CD8-positive, alpha-beta T cell (primary cell): ENCODE measurements at regions of chr22 and their contacts with region 1.

Region 1: DNA sequence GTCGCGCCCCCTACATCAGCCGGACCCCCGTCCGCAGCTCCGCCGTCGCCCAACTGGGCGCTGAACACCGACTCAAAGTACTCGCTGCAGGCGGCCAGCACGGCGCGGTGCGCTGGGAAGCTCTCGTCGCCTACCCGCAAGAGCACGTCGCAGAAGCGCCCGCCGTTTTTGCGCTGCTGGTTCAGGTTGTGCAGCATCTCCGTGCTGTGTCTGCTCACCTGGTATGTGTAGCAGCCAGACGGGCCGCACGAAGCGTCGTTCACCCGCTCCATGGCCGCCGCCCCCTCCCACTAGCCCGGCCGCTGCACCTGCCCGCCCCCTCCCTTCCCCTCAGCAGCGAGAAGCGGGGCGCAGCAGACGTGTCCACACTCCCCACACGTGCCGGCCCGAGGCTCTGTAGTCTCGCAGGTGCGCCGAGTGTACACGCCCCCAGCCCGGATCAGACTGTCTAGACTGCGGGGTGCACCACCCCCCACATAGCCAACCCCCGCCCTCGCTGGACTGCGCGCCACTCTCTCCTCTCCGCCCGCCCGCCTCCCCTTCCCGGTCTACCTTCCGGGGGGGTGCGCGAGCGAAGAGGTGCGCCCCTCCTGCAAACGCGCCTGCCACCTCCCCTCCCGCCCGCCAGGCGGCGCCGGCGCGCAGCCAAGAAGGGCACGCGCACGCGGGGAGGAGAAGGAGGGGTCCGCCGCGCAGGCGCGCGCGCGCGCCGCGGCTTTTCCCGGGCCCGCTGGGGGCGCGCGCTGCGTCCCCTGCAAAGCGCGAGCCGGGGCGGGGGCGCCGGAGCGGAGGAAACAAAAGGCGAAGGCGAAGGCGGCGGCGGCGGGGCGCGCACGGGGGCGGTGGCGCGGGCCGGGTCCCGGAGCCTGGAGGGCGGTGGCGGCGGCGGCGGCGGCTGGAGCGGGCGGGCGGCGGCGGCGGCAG is 553 bp downstream of the PATZ1 start:
- DNase-seq: peak; percentile 78 to 97 (median 90)
- ATAC-seq: peak; percentile 77
- H3K4me3 ChIP-seq: peak overlapping the region; percentile 63 to 72
- H3K4me3 Mint-ChIP-seq: peak overlapping the region; percentile 90
- H3K27ac ChIP-seq: peak overlapping the region; percentile 51 to 70
- H3K27ac Mint-ChIP-seq: peak overlapping the region; percentile 93
- H3K4me1 ChIP-seq: peaks cover 52% of the 10 kb centered on the region
- H3K4me1 Mint-ChIP-seq: peaks cover 52% of the 10 kb centered on the region
- H3K27me3 ChIP-seq: no peaks in the 10 kb centered on the region
- H3K27me3 Mint-ChIP-seq: no peaks in the 10 kb centered on the region
- CTCF ChIP-seq: peak; percentile 82

Region 2: DNA sequence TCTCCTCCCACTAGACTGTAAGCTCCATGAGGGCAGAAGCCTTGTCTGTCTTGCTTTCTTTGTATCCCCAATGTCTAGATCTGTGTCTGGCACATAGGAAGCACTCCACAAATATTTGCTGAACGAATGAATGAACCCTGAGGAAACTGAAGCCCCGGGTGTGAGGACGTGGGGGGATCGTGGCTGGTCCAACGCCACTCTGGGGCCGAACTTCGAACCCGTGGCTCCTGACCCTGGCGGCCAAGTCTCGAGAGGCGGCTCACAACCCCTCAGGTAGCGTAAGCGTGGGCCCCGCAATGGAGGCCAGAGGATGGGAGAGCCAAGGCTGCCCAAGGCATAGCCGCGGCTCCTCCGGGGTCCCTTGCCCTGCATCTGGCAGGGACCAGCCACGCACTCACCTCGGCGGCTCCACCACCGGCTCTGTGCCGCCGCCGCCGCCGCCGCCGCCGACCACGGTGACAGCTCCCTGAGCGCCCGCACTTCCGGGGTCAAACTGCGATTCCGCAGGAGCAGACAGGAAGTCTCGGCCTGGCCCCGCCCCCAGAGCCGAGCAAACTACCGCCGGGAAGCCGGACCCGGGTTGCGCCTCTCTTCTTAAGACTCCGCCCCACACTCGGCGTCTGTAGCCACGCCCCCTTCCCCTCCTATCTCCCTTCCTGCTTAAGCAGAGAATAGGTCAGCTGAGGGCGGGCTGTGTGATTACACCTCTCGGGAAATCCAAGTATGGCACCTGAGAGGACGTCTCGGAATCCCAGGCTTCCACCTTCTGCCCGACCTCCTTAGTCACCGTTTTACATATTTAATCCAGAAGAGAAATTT is 1507.6 kb before region 1 on chr22 and contains the start of gene ASCC2:
- CTCF ChIA-PET with region 1: no interaction called
- POLR2A ChIA-PET with region 1: no interaction called
- intact Hi-C with region 1: loop called in 1 of 2 experiments (anchors 10 kb)
- DNase-seq: peak; percentile 97 to 100 (median 99)
- ATAC-seq: peak; percentile 98
- H3K4me3 ChIP-seq: peak within 1 kb of the TSS; percentile 76 to 85
- H3K4me3 Mint-ChIP-seq: peak within 1 kb of the TSS; percentile 92
- H3K27ac ChIP-seq: peak within 1 kb of the TSS; percentile 55 to 85
- H3K27ac Mint-ChIP-seq: peak within 1 kb of the TSS; percentile 97
- H3K4me1 ChIP-seq: peaks cover 15% of the 10 kb centered on the region
- H3K4me1 Mint-ChIP-seq: peaks cover 43% of the 10 kb centered on the region
- H3K27me3 ChIP-seq: no peaks in the 10 kb centered on the region
- H3K27me3 Mint-ChIP-seq: no peaks in the 10 kb centered on the region
- CTCF ChIP-seq: no peak
- total RNA-seq, gene ASCC2: 66.2 to 76.5 TPM

Region 3: DNA sequence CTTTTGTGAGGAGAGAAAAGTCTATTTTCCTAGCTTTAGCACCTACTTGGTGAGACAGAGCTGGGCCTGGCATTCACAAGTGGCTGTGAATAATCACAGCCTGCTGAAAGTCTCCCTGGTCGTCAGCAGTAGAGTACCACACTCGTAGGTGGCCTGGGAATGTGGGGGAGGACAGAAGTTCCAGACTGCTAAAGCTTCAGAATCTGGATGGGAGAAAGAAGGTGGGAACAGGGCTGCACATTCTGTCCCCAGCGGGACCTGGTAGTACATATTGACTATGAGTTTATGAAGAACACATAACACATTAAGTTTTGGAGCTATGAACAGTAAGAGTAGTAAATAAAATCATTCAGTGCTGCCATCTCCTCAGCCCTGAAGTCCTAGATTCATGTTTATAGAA is 152.5 kb before region 1 on chr22:
- CTCF ChIA-PET with region 1: no interaction called
- POLR2A ChIA-PET with region 1: interaction called, 10 read pairs
- intact Hi-C with region 1: no loop called
- DNase-seq: no peak
- ATAC-seq: no peak
- H3K4me3 ChIP-seq: no peak overlapping the region
- H3K4me3 Mint-ChIP-seq: no peak overlapping the region
- H3K27ac ChIP-seq: no peak overlapping the region
- H3K27ac Mint-ChIP-seq: no peak overlapping the region
- H3K4me1 ChIP-seq: no peaks in the 10 kb centered on the region
- H3K4me1 Mint-ChIP-seq: no peaks in the 10 kb centered on the region
- H3K27me3 ChIP-seq: no peaks in the 10 kb centered on the region
- H3K27me3 Mint-ChIP-seq: no peaks in the 10 kb centered on the region
- CTCF ChIP-seq: no peak

Region 4: DNA sequence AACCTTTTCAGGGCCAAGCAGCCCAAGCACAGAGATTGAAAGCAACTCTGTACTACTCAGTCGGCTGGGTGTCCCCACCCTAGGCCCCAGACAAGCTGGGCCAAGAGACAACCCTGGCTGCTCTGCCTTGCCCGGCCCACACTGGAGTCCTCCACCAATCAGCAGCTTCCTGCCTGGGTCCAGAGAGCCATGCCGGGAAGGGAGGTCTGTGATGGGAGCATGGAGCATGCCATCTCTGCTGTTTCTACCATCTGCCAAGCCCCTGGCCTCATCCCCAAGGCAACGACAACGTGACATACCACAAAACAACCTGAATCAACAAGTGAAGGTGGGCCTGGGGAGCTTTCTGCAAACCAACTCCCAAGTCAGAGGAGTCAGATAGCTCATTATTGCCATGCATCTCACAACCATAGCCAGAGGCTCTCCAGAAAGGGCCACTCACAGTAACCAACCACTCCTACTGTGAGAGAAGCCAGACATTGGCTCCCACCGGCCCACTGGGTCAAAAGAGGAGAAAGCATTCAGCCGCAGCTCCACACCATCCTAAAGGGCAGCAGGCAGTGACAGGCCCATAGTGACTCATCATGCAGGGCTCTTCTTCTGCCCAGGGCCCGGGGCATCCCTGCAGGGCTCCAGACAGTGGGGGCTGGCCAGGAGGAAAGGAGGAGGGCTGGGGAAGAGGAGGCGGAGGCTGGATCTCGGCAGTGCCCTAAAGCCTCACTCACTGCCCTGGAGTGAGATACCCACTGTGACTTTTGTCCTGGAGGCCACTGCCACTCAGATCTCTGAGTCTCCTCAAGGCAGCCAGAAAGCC is 17.5 kb before region 1 on chr22:
- CTCF ChIA-PET with region 1: no interaction called
- POLR2A ChIA-PET with region 1: no interaction called
- intact Hi-C with region 1: no loop called
- DNase-seq: no peak
- ATAC-seq: no peak
- H3K4me3 ChIP-seq: no peak overlapping the region
- H3K4me3 Mint-ChIP-seq: no peak overlapping the region
- H3K27ac ChIP-seq: no peak overlapping the region
- H3K27ac Mint-ChIP-seq: peak overlapping the region; percentile 52
- H3K4me1 ChIP-seq: peaks cover 8% of the 10 kb centered on the region
- H3K4me1 Mint-ChIP-seq: peaks cover 21% of the 10 kb centered on the region
- H3K27me3 ChIP-seq: no peaks in the 10 kb centered on the region
- H3K27me3 Mint-ChIP-seq: no peaks in the 10 kb centered on the region
- CTCF ChIP-seq: no peak

Region 5: GRCh38 chr22:31465307-31465706 is 119.7 kb after region 1 on chr22:
- CTCF ChIA-PET with region 1: no interaction called
- POLR2A ChIA-PET with region 1: no interaction called
- intact Hi-C with region 1: no loop called
- DNase-seq: no peak
- ATAC-seq: no peak
- H3K4me3 ChIP-seq: no peak overlapping the region
- H3K4me3 Mint-ChIP-seq: no peak overlapping the region
- H3K27ac ChIP-seq: no peak overlapping the region
- H3K27ac Mint-ChIP-seq: no peak overlapping the region
- H3K4me1 ChIP-seq: no peaks in the 10 kb centered on the region
- H3K4me1 Mint-ChIP-seq: peaks cover 3% of the 10 kb centered on the region
- H3K27me3 ChIP-seq: no peaks in the 10 kb centered on the region
- H3K27me3 Mint-ChIP-seq: no peaks in the 10 kb centered on the region
- CTCF ChIP-seq: no peak

Region 6: GRCh38 chr22:31489604-31490495 is 144.3 kb after region 1 on chr22 and contains the start of gene EIF4ENIF1:
- CTCF ChIA-PET with region 1: no interaction called
- POLR2A ChIA-PET with region 1: interaction called, 6 read pairs
- intact Hi-C with region 1: loop called (anchors 2 kb)
- DNase-seq: peak; percentile 71 to 93 (median 85)
- ATAC-seq: peak; percentile 80
- H3K4me3 ChIP-seq: peak within 1 kb of the TSS; percentile 78 to 79
- H3K4me3 Mint-ChIP-seq: peak within 1 kb of the TSS; percentile 93
- H3K27ac ChIP-seq: peak within 1 kb of the TSS; percentile 92
- H3K27ac Mint-ChIP-seq: peak within 1 kb of the TSS; percentile 98
- H3K4me1 ChIP-seq: peaks cover 18% of the 10 kb centered on the region
- H3K4me1 Mint-ChIP-seq: peaks cover 47% of the 10 kb centered on the region
- H3K27me3 ChIP-seq: no peaks in the 10 kb centered on the region
- H3K27me3 Mint-ChIP-seq: no peaks in the 10 kb centered on the region
- CTCF ChIP-seq: no peak
- total RNA-seq, gene EIF4ENIF1: 12.1 to 14.5 TPM

Region 7: DNA sequence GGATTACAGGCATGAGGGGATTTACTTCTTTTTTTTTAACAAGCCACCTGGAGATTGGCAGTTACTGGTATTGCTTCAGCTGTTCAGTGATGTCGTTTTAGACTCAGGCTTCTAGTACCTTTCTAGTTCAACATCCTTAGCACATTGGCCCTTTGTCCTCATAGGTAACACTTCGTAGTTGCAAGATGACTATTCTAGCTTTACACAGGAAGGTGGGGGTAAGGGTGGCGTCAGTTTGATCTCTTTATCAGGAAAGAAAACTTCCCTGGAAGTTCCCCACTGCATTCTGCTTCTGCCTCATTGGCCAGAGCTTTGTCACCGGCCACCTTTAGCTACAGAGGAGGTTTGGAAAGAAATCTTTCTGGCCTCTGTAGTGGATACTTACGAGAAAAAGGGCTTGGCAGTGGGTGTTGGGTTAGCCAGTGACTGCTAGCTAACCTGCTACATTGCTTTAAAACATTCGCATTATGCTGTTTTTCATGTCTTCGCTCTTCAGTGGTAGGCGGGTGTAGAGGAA is 191.5 kb after region 1 on chr22:
- CTCF ChIA-PET with region 1: no interaction called
- POLR2A ChIA-PET with region 1: no interaction called
- intact Hi-C with region 1: no loop called
- DNase-seq: peak in 2 of 9 experiments; percentile 17 to 55
- ATAC-seq: peak; percentile 55
- H3K4me3 ChIP-seq: no peak overlapping the region
- H3K4me3 Mint-ChIP-seq: no peak overlapping the region
- H3K27ac ChIP-seq: peak overlapping the region in 1 of 2 experiments; percentile 54
- H3K27ac Mint-ChIP-seq: peak overlapping the region; percentile 69
- H3K4me1 ChIP-seq: peaks cover 3% of the 10 kb centered on the region
- H3K4me1 Mint-ChIP-seq: peaks cover 37% of the 10 kb centered on the region
- H3K27me3 ChIP-seq: no peaks in the 10 kb centered on the region
- H3K27me3 Mint-ChIP-seq: no peaks in the 10 kb centered on the region
- CTCF ChIP-seq: no peak

Region 8: DNA sequence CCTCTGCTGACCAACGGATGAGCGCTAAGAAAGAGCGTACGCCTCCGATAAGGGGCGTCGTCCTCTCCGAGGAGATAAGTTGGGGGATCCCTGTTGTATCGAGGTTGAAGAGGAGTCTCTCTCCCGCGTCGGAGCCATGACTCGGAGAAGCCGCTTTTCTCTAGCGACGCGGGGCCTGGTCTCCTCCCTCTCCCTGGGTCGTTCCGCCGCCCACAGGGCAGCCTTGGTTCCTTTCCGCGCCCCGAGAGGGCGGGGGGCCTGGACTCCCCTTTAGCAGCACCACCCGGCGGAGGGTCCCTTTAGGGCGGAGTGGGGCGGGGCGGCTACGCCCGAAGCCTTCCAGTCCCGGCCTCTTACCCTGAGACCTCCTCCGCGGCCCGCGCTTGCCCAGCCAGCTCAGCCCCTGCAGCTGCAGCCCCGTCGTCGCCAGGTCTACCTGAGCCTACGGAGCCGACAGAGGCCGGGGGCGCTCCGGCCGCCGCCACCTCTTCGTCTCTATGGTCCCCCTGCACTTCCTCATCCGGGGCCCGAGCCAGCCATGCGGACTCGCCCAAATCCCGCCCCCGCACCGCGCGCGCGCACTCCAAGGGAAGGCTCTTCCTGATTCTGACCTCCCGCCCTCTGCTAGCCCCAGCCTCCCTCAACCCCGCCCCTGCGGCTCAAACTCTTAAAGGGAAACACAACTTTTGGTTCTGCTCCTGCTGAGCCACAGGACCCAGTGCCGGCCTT is 404.2 kb after region 1 on chr22 and contains the start of gene PRR14L:
- CTCF ChIA-PET with region 1: no interaction called
- POLR2A ChIA-PET with region 1: no interaction called
- intact Hi-C with region 1: loop called (anchors 2 kb)
- DNase-seq: peak; percentile 96 to 100 (median 99)
- ATAC-seq: peak; percentile 75
- H3K4me3 ChIP-seq: peak within 1 kb of the TSS; percentile 84 to 90
- H3K4me3 Mint-ChIP-seq: peak within 1 kb of the TSS; percentile 98
- H3K27ac ChIP-seq: peak within 1 kb of the TSS; percentile 79 to 84
- H3K27ac Mint-ChIP-seq: peak within 1 kb of the TSS; percentile 97
- H3K4me1 ChIP-seq: peaks cover 40% of the 10 kb centered on the region
- H3K4me1 Mint-ChIP-seq: peaks cover 53% of the 10 kb centered on the region
- H3K27me3 ChIP-seq: no peaks in the 10 kb centered on the region
- H3K27me3 Mint-ChIP-seq: no peaks in the 10 kb centered on the region
- CTCF ChIP-seq: no peak
- total RNA-seq, gene PRR14L: 17.8 to 21.2 TPM